ENCODE measurements at regions of chr6 and their contacts with region 1.

Region 1: DNA sequence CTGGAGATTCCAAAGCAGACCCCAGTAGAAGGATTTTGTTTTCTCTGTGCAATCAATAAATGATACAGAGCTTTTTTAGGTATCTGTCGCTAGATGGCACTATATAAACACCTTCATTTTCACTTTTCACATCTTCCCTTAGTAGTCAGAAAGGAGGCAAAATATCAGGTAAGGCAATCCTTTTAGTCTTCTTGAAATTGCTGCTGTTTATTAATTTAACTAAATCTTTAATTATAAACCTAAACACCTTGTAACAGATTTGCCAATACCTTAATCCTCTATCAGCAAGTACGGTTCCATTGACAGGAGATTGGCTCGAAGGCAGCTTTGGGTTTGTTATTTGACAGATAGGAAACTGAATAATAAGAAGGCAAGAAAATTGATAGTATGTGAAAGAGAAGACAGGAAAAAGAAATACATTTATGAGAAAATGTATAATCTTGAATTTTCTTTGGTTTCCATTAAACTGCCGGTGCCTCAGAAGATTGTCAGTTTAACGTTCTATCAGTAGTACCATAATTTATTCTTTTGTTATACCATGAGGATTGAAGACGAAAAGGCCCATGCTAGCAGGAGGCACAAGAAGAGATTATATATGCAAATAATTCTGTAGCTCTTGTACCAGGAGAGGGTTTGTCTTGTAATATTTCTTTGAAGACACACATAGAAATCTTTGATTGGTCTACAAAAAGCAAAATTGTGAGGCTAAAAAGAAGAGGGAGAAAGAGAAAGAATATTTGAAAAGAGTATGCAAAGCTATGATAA is 23.5 kb upstream of the IBTK start:
- DNase-seq: peak in 2 of 9 experiments; percentile 43 to 57
- ATAC-seq: peak; percentile 36
- H3K4me3 ChIP-seq: no peak overlapping the region
- H3K4me3 Mint-ChIP-seq: no peak overlapping the region
- H3K27ac ChIP-seq: no peak overlapping the region
- H3K27ac Mint-ChIP-seq: no peak overlapping the region
- H3K4me1 ChIP-seq: no peaks in the 10 kb centered on the region
- H3K4me1 Mint-ChIP-seq: no peaks in the 10 kb centered on the region
- H3K27me3 ChIP-seq: peaks cover 0 to 4% of the 10 kb centered on the region in 2 experiments
- H3K27me3 Mint-ChIP-seq: peaks cover 4% of the 10 kb centered on the region
- CTCF ChIP-seq: peak; percentile 80

Region 2: GRCh38 chr6:83057705-83058321 is 786.8 kb after region 1 on chr6:
- CTCF ChIA-PET with region 1: interaction called, 29 read pairs
- POLR2A ChIA-PET with region 1: no interaction called
- intact Hi-C with region 1: loop called (anchors 1 kb)
- DNase-seq: peak in 3 of 9 experiments; percentile 14 to 39 (median 28)
- ATAC-seq: no peak
- H3K4me3 ChIP-seq: no peak overlapping the region
- H3K4me3 Mint-ChIP-seq: no peak overlapping the region
- H3K27ac ChIP-seq: no peak overlapping the region
- H3K27ac Mint-ChIP-seq: no peak overlapping the region
- H3K4me1 ChIP-seq: no peaks in the 10 kb centered on the region
- H3K4me1 Mint-ChIP-seq: peaks cover 27% of the 10 kb centered on the region
- H3K27me3 ChIP-seq: no peaks in the 10 kb centered on the region
- H3K27me3 Mint-ChIP-seq: no peaks in the 10 kb centered on the region
- CTCF ChIP-seq: no peak

Region 3: DNA sequence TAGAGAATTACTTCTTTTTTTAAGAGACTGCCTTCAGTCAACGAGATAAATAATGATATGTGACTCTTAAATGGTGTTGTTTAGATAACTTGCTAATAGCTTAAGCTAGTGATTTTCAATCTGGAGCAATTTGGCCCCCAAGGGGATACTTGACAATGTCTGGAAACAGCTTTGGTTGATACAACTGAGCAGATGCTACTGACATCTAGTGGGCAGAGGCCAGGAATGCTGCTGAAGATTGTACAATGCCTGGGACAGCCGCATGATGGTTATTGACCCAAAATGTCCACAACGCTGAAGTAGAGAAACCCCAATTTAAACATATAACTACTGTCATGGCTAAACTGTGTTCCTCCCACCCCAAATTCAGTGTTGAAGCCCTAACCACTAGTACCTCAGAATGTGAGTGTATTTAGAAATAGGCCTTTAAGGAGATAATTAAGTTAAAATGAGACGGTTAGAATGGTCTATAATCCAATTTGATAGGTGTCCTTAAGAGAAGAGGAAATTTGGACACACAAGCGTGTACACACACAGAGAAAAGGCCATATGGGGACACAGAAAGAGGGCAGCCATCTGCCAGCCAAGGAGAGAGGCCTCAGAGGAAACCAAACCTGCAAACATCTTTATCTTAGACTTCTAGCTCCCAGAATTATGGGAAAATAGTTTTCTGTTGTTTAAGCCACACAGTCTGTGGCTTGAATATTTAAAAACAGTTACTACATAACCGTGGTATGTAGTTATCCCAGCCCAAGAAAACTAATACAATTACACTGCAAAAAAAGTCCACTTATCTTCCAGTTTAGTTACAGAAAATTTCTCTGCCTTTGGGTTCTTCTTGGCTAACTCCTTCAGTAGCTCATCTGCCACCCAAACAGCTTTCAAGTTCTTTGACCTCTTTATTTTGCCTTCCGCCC is 944.3 kb after region 1 on chr6:
- CTCF ChIA-PET with region 1: interaction called, 10 read pairs
- POLR2A ChIA-PET with region 1: no interaction called
- intact Hi-C with region 1: loop called (anchors 1 to 5 kb)
- DNase-seq: peak; percentile 11 to 72 (median 53)
- ATAC-seq: peak; percentile 90
- H3K4me3 ChIP-seq: no peak overlapping the region
- H3K4me3 Mint-ChIP-seq: no peak overlapping the region
- H3K27ac ChIP-seq: no peak overlapping the region
- H3K27ac Mint-ChIP-seq: no peak overlapping the region
- H3K4me1 ChIP-seq: no peaks in the 10 kb centered on the region
- H3K4me1 Mint-ChIP-seq: no peaks in the 10 kb centered on the region
- H3K27me3 ChIP-seq: no peaks in the 10 kb centered on the region
- H3K27me3 Mint-ChIP-seq: peaks cover 9% of the 10 kb centered on the region
- CTCF ChIP-seq: peak; percentile 68

Region 4: DNA sequence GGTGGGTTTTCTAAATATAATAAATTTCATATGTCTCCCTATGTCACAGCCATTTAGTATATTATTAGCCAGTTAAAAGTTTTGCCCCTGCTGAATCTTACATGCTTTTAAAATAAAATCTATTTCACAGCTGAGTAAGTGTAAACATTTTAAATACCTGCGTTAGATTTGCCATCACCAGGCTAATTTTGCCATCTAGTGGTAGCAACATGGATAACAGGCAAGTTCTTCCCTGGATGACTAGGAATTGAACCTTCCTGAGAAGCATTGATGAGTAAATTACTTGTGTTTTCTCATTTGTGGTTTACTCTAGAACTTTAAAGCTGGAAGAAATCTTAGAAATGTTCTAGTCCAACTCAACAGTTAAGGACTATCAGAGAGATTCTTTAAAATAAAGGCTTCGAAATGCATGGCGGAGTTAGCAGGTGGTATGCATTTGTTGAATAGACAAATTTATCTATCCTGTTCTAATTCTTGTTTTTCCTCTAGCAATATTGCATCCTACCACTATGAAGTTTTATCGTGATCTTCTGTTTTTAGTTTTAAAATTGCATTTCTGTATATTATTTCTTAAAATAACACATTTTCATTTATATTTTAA is 1243.9 kb after region 1 on chr6:
- CTCF ChIA-PET with region 1: interaction called, 7 read pairs
- POLR2A ChIA-PET with region 1: no interaction called
- intact Hi-C with region 1: loop called (anchors 2 to 10 kb)
- DNase-seq: peak in 2 of 9 experiments; percentile 52 to 53
- ATAC-seq: no peak
- H3K4me3 ChIP-seq: no peak overlapping the region
- H3K4me3 Mint-ChIP-seq: no peak overlapping the region
- H3K27ac ChIP-seq: no peak overlapping the region
- H3K27ac Mint-ChIP-seq: no peak overlapping the region
- H3K4me1 ChIP-seq: no peaks in the 10 kb centered on the region
- H3K4me1 Mint-ChIP-seq: peaks cover 11% of the 10 kb centered on the region
- H3K27me3 ChIP-seq: no peaks in the 10 kb centered on the region
- H3K27me3 Mint-ChIP-seq: peaks cover 31% of the 10 kb centered on the region
- CTCF ChIP-seq: peak; percentile 71

Measured in CD8-positive, alpha-beta T cell (primary cell).